ENCODE measurements at regions of chrX and their contacts with region 1.

Region 1: DNA sequence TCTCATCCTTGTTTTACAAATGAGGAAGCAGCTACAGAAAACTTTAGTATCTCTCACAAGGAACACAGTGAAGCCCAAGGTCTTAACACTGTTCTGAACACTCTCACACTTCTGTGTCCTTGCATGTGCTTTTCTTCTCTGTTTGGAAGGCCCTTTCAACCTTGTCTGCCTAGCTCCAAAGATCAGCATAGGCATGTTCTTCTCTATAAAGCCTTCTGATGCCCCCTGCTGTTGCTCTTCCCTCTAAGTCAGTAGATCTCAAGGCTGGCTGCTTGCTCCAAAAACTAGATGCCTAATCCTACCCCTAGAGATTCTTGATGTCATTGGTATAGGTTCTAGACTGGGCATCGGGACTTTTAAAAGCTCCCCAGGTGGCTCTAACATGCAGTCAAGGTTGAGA is 5.9 kb downstream of the APOO start:
- DNase-seq: peak; percentile 87
- H3K4me3 Mint-ChIP-seq: no peak overlapping the region
- H3K27ac Mint-ChIP-seq: no peak overlapping the region
- H3K4me1 Mint-ChIP-seq: peaks cover 16% of the 10 kb centered on the region
- H3K27me3 Mint-ChIP-seq: no peaks in the 10 kb centered on the region
- CTCF ChIP-seq: peak; percentile 56

Region 2: DNA sequence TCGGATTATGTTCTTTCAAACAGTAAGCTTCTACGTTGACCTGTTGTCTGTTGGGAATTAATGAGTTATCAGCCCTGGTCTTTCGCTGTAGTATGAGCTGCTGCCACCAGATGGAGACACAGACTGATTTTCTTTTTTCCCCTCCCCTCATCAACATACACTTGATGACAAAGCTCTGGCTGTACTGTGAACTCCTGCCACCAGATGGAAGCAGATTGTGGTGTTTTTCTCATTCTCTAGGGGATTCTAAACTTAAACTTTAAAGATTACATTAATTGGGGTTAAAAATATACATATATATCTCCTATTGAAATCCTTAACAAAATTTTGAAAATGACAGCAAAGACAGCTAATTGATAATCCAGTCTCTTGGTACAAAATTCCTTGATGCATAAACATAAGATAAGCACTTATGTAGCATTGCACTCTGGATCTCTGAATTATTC is 1916.5 kb before region 1 on chrX:
- CTCF ChIA-PET with region 1: interaction called, 8 read pairs
- POLR2A ChIA-PET with region 1: no interaction called
- intact Hi-C with region 1: loop called (anchors 1 kb)
- DNase-seq: peak; percentile 85
- H3K4me3 Mint-ChIP-seq: no peak overlapping the region
- H3K27ac Mint-ChIP-seq: no peak overlapping the region
- H3K4me1 Mint-ChIP-seq: no peaks in the 10 kb centered on the region
- H3K27me3 Mint-ChIP-seq: peaks cover 62% of the 10 kb centered on the region
- CTCF ChIP-seq: peak; percentile 92

Region 3: DNA sequence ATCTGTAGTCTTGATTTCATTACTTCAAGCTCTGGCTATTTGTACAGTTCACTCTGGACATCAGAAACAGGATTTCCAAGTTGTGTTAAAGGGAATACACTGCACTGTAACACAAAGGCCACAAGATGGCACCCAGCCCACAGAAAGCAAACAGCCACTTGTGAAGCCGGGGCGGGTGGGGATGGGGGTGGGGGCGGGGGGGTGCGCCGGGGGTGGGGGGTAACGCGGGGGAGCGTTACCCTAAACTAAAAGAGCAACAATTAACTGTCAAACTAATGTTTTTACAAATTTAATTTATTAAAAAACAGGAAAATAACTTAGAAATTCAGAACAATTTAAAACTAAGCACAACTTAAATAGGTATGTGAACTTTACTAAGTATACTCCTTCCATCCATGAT is 207.2 kb before region 1 on chrX:
- CTCF ChIA-PET with region 1: interaction called, 137 read pairs
- POLR2A ChIA-PET with region 1: interaction called, 13 read pairs
- intact Hi-C with region 1: loop called (anchors 1 kb)
- DNase-seq: peak; percentile 75
- H3K4me3 Mint-ChIP-seq: no peak overlapping the region
- H3K27ac Mint-ChIP-seq: no peak overlapping the region
- H3K4me1 Mint-ChIP-seq: no peaks in the 10 kb centered on the region
- H3K27me3 Mint-ChIP-seq: no peaks in the 10 kb centered on the region
- CTCF ChIP-seq: peak; percentile 70

Region 4: DNA sequence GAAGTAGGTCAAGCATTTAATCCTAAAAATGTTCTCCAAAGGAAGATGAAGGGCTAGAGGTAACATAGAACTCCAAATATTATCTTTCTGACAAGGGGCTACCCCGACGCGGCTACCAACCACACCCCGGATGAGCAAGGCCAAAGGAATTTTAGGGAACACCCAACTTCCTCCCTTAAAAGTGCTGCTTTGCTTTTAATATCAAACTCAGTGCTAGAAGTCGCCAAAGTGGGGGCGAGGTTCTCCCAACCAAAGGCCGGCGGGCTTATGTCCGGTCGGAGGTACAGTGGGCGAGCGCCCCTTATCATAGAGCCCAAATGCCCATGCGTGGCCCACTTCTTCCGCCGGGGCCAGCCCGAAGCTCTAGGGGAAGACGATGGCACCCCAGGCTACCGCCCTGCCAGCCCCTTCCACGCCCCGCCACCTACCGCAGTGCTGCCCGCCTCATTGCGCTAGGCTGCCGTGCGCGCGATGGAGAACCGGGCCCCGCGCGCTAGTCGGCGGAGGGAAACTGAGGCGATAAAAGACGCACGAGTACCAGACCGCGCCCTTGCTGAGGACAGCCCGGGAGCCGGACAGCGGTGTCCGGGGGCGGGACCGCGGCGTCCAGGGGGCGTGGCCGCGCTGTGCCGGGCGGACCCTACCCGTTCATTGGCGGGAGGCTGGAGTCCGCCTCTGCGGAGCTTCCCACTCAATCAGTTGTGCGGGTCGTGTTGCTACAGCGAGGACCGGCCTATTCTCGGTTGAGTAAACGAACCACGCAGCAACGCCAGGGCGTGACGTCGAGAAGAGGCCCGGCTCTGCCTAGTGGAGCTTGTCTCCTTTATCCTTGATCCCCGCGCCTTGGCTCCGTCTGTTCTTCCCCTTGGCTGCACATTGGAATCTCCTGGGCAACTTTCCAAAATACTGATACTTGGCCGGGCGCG is 158.8 kb before region 1 on chrX and contains the start of gene ACOT9:
- CTCF ChIA-PET with region 1: interaction called, 9 read pairs
- POLR2A ChIA-PET with region 1: interaction called, 21 read pairs
- intact Hi-C with region 1: loop called (anchors 1 kb)
- DNase-seq: peak; percentile 94
- H3K4me3 Mint-ChIP-seq: peak within 1 kb of the TSS; percentile 73
- H3K27ac Mint-ChIP-seq: peak within 1 kb of the TSS; percentile 77
- H3K4me1 Mint-ChIP-seq: peaks cover 13% of the 10 kb centered on the region
- H3K27me3 Mint-ChIP-seq: no peaks in the 10 kb centered on the region
- CTCF ChIP-seq: no peak
- total RNA-seq, gene ACOT9: 71.9 and 83.9 TPM in 2 replicates

Region 5: GRCh38 chrX:23788521-23788920 is 113.3 kb before region 1 on chrX:
- CTCF ChIA-PET with region 1: interaction called, 54 read pairs
- POLR2A ChIA-PET with region 1: interaction called, 140 read pairs
- intact Hi-C with region 1: no loop called
- DNase-seq: no peak
- H3K4me3 Mint-ChIP-seq: no peak overlapping the region
- H3K27ac Mint-ChIP-seq: no peak overlapping the region
- H3K4me1 Mint-ChIP-seq: peaks cover 16% of the 10 kb centered on the region
- H3K27me3 Mint-ChIP-seq: no peaks in the 10 kb centered on the region
- CTCF ChIP-seq: no peak

Region 6: DNA sequence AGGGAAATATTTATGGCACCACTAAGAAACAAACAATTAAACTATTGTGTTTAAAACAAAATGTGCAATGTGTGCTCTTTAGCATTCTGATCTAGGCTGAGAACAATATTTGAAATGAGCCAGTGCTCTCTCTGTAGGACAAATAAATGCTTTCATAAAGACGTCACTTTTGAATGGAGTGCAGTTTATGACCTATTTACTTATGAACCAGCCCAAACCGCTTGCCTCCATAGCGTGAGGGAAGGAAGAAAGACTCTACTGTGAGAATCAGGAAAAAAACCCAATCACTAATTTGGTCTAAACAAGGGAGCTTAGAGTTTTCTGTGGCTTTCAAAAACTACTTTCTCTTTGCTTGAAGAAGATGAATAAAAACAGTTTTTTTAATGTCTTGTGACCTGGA is 79.4 kb before region 1 on chrX:
- CTCF ChIA-PET with region 1: interaction called, 25 read pairs
- POLR2A ChIA-PET with region 1: no interaction called
- intact Hi-C with region 1: no loop called
- DNase-seq: no peak
- H3K4me3 Mint-ChIP-seq: no peak overlapping the region
- H3K27ac Mint-ChIP-seq: no peak overlapping the region
- H3K4me1 Mint-ChIP-seq: peaks cover 6% of the 10 kb centered on the region
- H3K27me3 Mint-ChIP-seq: peaks cover 25% of the 10 kb centered on the region
- CTCF ChIP-seq: no peak

Region 7: GRCh38 chrX:23964191-23964590 is 62.4 kb after region 1 on chrX:
- CTCF ChIA-PET with region 1: no interaction called
- POLR2A ChIA-PET with region 1: no interaction called
- intact Hi-C with region 1: no loop called
- DNase-seq: no peak
- H3K4me3 Mint-ChIP-seq: no peak overlapping the region
- H3K27ac Mint-ChIP-seq: no peak overlapping the region
- H3K4me1 Mint-ChIP-seq: no peaks in the 10 kb centered on the region
- H3K27me3 Mint-ChIP-seq: peaks cover 56% of the 10 kb centered on the region
- CTCF ChIP-seq: no peak

Region 8: DNA sequence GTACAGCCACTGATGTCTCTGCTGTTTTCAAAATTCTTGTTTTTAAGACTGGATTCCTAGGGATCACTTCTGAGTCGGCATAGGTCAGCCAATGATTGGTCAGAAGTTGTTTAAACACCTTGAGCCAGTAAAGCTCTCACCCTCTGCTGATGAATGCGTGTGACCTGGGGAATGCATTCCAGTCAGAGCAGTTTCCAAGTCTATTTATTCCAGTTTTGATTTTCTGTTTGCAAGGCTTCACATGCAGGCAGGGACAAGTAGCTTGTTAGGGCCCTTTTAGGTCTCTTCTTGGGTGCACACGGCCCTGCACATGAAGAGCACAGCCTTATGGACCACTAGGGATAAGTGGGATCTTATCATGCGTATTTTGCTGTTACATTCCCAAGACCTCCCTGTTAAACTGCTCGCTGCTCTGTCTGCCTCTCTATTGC is 78.2 kb after region 1 on chrX:
- CTCF ChIA-PET with region 1: no interaction called
- POLR2A ChIA-PET with region 1: no interaction called
- intact Hi-C with region 1: no loop called
- DNase-seq: no peak
- H3K4me3 Mint-ChIP-seq: no peak overlapping the region
- H3K27ac Mint-ChIP-seq: no peak overlapping the region
- H3K4me1 Mint-ChIP-seq: no peaks in the 10 kb centered on the region
- H3K27me3 Mint-ChIP-seq: peaks cover 64% of the 10 kb centered on the region
- CTCF ChIP-seq: no peak

Region 9: GRCh38 chrX:24024819-24025740 is 123.3 kb after region 1 on chrX:
- CTCF ChIA-PET with region 1: interaction called, 6 read pairs
- POLR2A ChIA-PET with region 1: interaction called, 42 read pairs
- intact Hi-C with region 1: no loop called
- DNase-seq: peak; percentile 83
- H3K4me3 Mint-ChIP-seq: peak overlapping the region; percentile 73
- H3K27ac Mint-ChIP-seq: peak overlapping the region; percentile 77
- H3K4me1 Mint-ChIP-seq: peaks cover 4% of the 10 kb centered on the region
- H3K27me3 Mint-ChIP-seq: peaks cover 41% of the 10 kb centered on the region
- CTCF ChIP-seq: no peak

Region 10: DNA sequence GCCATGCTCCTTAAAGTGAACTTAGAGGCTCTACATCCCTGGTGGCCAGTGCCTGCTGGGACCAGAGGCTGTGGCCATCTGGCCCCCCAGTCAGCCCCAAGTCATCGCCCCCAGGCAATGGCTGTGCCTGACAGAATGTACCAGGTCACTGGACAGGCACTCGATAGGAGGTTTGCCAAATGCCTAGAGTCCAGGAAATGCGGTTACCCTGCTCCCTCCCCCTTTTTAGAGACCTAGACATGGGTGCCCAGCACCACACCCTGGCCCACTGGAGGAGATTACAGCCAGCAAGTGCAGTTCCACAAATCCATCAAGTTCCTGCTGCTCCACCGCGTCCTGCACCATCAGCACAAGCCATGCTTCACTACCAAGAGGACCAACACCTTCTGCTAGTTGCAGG is 231.5 kb after region 1 on chrX:
- CTCF ChIA-PET with region 1: no interaction called
- POLR2A ChIA-PET with region 1: no interaction called
- intact Hi-C with region 1: no loop called
- DNase-seq: no peak
- H3K4me3 Mint-ChIP-seq: no peak overlapping the region
- H3K27ac Mint-ChIP-seq: no peak overlapping the region
- H3K4me1 Mint-ChIP-seq: peaks cover 5% of the 10 kb centered on the region
- H3K27me3 Mint-ChIP-seq: peaks cover 9% of the 10 kb centered on the region
- CTCF ChIP-seq: no peak